ENCODE measurements at regions of chr12 and their contacts with region 1.

Region 1: DNA sequence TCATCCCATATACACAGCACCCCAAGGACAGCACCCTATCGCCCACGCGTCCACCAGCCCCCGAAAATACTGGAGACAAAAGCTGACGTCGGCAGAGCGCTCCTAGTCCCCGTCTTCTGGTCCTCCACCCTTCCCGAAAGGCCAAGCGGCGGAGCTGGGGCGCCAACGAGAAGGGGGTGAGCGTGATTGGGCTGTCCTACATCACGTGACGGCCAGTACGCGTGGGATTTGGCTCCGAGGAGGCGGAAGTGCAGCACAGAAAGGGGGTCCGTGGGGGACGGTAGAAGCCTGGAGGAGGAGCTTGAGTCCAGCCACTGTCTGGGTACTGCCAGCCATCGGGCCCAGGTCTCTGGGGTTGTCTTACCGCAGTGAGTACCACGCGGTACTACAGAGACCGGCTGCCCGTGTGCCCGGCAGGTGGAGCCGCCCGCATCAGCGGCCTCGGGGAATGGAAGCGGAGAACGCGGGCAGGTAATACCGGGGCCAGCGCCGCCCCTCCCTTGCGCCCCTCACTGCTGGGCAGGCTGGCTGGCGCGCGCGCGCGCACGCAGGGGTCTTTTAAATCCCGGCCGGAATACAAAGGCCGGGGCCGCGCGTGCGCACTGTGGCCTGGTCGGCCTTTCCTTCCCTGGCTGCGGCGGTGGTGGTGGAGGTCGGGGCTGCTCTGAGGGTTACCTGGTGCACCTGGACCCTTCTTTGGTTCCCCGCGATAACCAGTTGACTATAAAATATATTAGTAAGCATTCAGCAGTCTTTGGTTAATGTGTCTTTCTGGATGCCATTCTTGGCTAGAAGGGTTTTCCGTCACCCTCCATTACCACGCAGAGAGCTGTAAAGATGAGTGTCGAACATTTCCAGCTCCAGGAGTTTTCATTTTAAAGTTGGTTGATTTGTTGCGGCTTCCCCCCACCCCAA is at the start of gene TDG:
- DNase-seq: peak; percentile 96
- CTCF ChIP-seq: no peak

Region 2: DNA sequence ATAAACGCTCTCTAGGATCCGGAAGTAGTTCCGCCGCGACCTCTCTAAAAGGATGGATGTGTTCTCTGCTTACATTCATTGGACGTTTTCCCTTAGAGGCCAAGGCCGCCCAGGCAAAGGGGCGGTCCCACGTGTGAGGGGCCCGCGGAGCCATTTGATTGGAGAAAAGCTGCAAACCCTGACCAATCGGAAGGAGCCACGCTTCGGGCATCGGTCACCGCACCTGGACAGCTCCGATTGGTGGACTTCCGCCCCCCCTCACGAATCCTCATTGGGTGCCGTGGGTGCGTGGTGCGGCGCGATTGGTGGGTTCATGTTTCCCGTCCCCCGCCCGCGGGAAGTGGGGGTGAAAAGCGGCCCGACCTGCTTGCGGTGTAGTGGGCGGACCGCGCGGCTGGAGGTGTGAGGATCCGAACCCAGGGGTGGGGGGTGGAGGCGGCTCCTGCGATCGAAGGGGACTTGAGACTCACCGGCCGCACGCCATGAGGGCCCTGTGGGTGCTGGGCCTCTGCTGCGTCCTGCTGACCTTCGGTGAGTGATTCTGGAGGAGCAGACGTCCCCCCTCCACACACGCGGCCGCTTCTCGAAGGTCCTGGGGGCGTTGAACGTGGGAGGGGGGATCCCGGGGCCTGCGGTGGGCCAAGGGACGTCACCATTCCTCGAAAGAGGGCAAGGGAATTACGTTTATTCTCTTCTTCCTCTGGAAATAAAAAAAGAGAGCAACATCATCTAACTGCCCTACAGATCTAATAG is 35.6 kb before region 1 on chr12 and contains the start of gene HSP90B1:
- CTCF ChIA-PET with region 1: interaction called, 3 read pairs
- POLR2A ChIA-PET with region 1: interaction called, 15 read pairs
- DNase-seq: peak; percentile 99
- CTCF ChIP-seq: no peak